ENCODE measurements at regions of chr6 and their contacts with region 1.

Region 1: GRCh38 chr6:18122124-18123093 is at the start of gene NHLRC1:
- DNase-seq: peak; percentile 90
- H3K4me3 ChIP-seq: peak within 1 kb of the TSS; percentile 68
- H3K27ac ChIP-seq: peak within 1 kb of the TSS; percentile 34
- H3K4me1 ChIP-seq: peaks cover 9% of the 10 kb centered on the region
- H3K27me3 ChIP-seq: no peaks in the 10 kb centered on the region
- CTCF ChIP-seq: peak; percentile 96
- total RNA-seq, gene NHLRC1: 1.1 TPM

Region 2: GRCh38 chr6:17831135-17831534 is 291.3 kb before region 1 on chr6:
- intact Hi-C with region 1: loop called (anchors 10 kb)
- DNase-seq: no peak
- H3K4me3 ChIP-seq: no peak overlapping the region
- H3K27ac ChIP-seq: peak overlapping the region; percentile 45
- H3K4me1 ChIP-seq: peaks cover 26% of the 10 kb centered on the region
- H3K27me3 ChIP-seq: no peaks in the 10 kb centered on the region
- CTCF ChIP-seq: no peak

Region 3: GRCh38 chr6:18503593-18504231 is 381.3 kb after region 1 on chr6:
- intact Hi-C with region 1: no loop called
- DNase-seq: peak; percentile 20
- H3K4me3 ChIP-seq: peak overlapping the region; percentile 58
- H3K27ac ChIP-seq: peak overlapping the region; percentile 49
- H3K4me1 ChIP-seq: peaks cover 13% of the 10 kb centered on the region
- H3K27me3 ChIP-seq: no peaks in the 10 kb centered on the region
- CTCF ChIP-seq: peak; percentile 92